ENCODE measurements at regions of chr15 and their contacts with region 1.

Region 1: GRCh38 chr15:20356444-20356910 is 185.1 kb downstream of the GOLGA6L6 start:
- DNase-seq: peak; percentile 60 to 84 (median 73)
- H3K4me3 ChIP-seq: no peak overlapping the region
- H3K4me3 Mint-ChIP-seq: peak overlapping the region in 3 of 7 donors; percentile 22 to 39 (median 22)
- H3K27ac ChIP-seq: no peak overlapping the region
- H3K27ac Mint-ChIP-seq: peak overlapping the region in 4 of 8 donors; percentile 10 to 67 (median 34)
- H3K4me1 ChIP-seq: peaks cover 19% of the 10 kb centered on the region
- H3K4me1 Mint-ChIP-seq: peaks cover 12 to 16% (median 12%) of the 10 kb centered on the region in 3 donors
- H3K27me3 ChIP-seq: no peaks in the 10 kb centered on the region
- H3K27me3 Mint-ChIP-seq: no peaks in the 10 kb centered on the region

Region 2: DNA sequence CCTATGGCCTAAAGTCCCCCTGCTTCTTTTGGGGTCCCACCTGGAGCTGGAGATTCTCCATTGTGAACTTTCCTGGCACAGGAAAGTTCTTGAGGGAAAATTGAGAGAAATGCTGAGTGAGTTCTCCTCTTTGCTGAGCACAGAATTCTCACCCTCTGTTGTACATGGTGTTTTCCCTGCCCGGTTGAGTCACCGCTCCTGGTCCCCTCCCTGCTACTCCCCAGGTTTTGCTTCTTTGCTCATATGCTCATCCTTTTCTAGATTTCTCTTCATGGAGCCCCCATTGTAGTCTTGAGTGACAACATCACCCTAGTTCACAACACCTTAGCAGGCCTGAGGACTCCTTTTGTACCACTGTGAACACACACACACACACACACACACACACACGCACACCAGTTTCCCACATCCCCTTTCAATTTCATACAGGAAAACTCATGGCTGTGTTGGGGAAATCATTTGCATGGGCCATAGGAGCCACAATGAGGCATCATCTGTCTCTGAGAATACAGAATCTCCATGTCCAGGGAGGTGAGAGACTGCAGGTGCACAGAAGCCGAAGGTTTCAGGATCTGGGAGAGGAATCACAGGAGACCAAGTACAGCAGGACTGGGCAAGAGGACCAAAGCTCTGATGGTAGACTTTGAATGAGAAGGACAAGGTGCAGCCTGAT is 400.2 kb before region 1 on chr15:
- CTCF ChIA-PET with region 1: no interaction called
- POLR2A ChIA-PET with region 1: no interaction called
- DNase-seq: no peak
- H3K4me3 ChIP-seq: no peak overlapping the region
- H3K4me3 Mint-ChIP-seq: no peak overlapping the region
- H3K27ac ChIP-seq: no peak overlapping the region
- H3K27ac Mint-ChIP-seq: peak overlapping the region in 1 of 8 donors; percentile 67
- H3K4me1 ChIP-seq: no peaks in the 10 kb centered on the region
- H3K4me1 Mint-ChIP-seq: no peaks in the 10 kb centered on the region
- H3K27me3 ChIP-seq: no peaks in the 10 kb centered on the region
- H3K27me3 Mint-ChIP-seq: no peaks in the 10 kb centered on the region

Region 3: GRCh38 chr15:20367093-20367492 is 10.6 kb after region 1 on chr15:
- CTCF ChIA-PET with region 1: interaction called, 10 read pairs
- POLR2A ChIA-PET with region 1: no interaction called
- DNase-seq: no peak
- H3K4me3 ChIP-seq: no peak overlapping the region
- H3K4me3 Mint-ChIP-seq: no peak overlapping the region
- H3K27ac ChIP-seq: no peak overlapping the region
- H3K27ac Mint-ChIP-seq: no peak overlapping the region
- H3K4me1 ChIP-seq: no peaks in the 10 kb centered on the region
- H3K4me1 Mint-ChIP-seq: no peaks in the 10 kb centered on the region
- H3K27me3 ChIP-seq: no peaks in the 10 kb centered on the region
- H3K27me3 Mint-ChIP-seq: no peaks in the 10 kb centered on the region

Region 4: GRCh38 chr15:20386198-20386597 is 29.7 kb after region 1 on chr15:
- CTCF ChIA-PET with region 1: no interaction called
- POLR2A ChIA-PET with region 1: no interaction called
- DNase-seq: no peak
- H3K4me3 ChIP-seq: no peak overlapping the region
- H3K4me3 Mint-ChIP-seq: no peak overlapping the region
- H3K27ac ChIP-seq: no peak overlapping the region
- H3K27ac Mint-ChIP-seq: no peak overlapping the region
- H3K4me1 ChIP-seq: no peaks in the 10 kb centered on the region
- H3K4me1 Mint-ChIP-seq: no peaks in the 10 kb centered on the region
- H3K27me3 ChIP-seq: no peaks in the 10 kb centered on the region
- H3K27me3 Mint-ChIP-seq: no peaks in the 10 kb centered on the region

Region 5: GRCh38 chr15:20409247-20409646 is 52.8 kb after region 1 on chr15:
- CTCF ChIA-PET with region 1: no interaction called
- POLR2A ChIA-PET with region 1: no interaction called
- DNase-seq: no peak
- H3K4me3 ChIP-seq: no peak overlapping the region
- H3K4me3 Mint-ChIP-seq: no peak overlapping the region
- H3K27ac ChIP-seq: no peak overlapping the region
- H3K27ac Mint-ChIP-seq: no peak overlapping the region
- H3K4me1 ChIP-seq: no peaks in the 10 kb centered on the region
- H3K4me1 Mint-ChIP-seq: no peaks in the 10 kb centered on the region
- H3K27me3 ChIP-seq: no peaks in the 10 kb centered on the region
- H3K27me3 Mint-ChIP-seq: no peaks in the 10 kb centered on the region

Region 6: GRCh38 chr15:22224241-22224671 is 1867.8 kb after region 1 on chr15:
- CTCF ChIA-PET with region 1: interaction called, 123 read pairs
- POLR2A ChIA-PET with region 1: interaction called, 4 read pairs
- DNase-seq: no peak
- H3K4me3 ChIP-seq: no peak overlapping the region
- H3K4me3 Mint-ChIP-seq: peak overlapping the region in 2 of 7 donors; percentile 30 to 74
- H3K27ac ChIP-seq: no peak overlapping the region
- H3K27ac Mint-ChIP-seq: peak overlapping the region in 3 of 8 donors; percentile 4 to 72 (median 51)
- H3K4me1 ChIP-seq: peaks cover 27% of the 10 kb centered on the region
- H3K4me1 Mint-ChIP-seq: peaks cover 30 to 37% (median 36%) of the 10 kb centered on the region in 3 donors
- H3K27me3 ChIP-seq: no peaks in the 10 kb centered on the region
- H3K27me3 Mint-ChIP-seq: peaks cover 0 to 1% of the 10 kb centered on the region in 2 donors

Measured in CD8-positive, alpha-beta memory T cell (primary cell).